Activated CD8-positive, alpha-beta memory T cell treated with anti-CD3 and anti-CD28 coated beads, Interleukin-2, amount 10 ng/mL, durations not matched to agents 7 days and 5 days (primary cell): ENCODE measurements at regions of chr7 and their contacts with region 1.

Region 1: DNA sequence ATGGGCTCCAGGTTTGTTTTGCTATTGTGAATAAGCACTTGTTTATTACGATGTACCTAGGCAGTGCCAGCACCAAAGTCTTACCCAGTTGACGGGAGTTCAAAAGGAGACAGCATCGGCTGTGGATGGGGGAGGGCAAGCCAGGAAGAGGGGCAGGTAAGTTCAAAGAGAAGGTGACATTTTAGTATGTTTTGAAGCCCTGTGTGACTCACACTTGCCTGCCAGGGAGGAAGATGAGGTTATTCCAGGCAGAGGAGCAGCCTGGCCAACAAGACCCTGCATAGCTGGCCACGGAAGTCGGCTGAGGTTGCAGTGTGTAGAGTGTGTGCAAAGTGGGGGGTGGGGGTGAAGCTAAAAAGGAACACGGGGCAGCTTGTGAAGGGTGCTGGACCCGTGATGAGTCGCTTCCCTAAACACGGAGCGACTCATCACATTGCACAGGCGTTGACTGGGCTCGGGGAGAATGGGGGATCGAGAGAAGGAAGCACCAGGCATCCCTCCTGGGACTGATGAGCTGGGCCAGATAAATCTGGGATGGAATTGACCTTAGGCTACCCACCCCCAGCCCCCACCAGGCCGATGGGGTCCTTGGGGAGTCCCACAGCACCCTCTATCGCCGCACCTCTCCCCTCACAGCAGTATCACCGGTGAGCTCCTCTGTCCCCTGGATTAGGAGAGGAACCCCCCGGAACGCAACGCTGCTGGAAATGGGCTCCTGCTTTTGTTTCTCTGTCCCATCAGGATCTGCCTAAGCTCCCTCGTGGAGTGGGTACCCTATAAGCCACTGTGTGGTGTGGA is 97.9 kb upstream of the IKZF1 start:
- DNase-seq: peak; percentile 89
- ATAC-seq: peak; percentile 67
- H3K4me3 Mint-ChIP-seq: peak overlapping the region; percentile 65
- H3K27ac Mint-ChIP-seq: peak overlapping the region; percentile 87
- H3K4me1 Mint-ChIP-seq: peaks cover 93% of the 10 kb centered on the region
- H3K27me3 Mint-ChIP-seq: no peaks in the 10 kb centered on the region

Region 2: DNA sequence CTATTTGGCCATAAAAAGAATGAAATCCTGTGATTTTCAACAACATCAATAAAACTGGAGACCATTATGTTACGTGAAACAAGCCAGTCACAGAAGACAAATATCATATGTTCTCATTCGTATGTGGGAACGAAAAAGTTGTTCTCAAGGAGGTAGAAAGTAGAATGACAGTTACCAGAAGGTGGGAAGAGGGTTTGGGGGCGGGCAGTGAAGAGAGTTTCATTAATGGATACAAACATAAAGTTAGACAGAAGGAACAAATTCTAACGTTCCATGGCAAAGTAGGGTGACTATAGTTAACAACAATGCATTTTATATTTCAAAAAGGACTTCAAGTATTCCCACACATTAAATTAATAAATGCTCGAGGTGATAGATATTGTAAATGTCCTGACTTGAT is 211.0 kb before region 1 on chr7:
- CTCF ChIA-PET with region 1: no interaction called
- DNase-seq: no peak
- ATAC-seq: no peak
- H3K4me3 Mint-ChIP-seq: no peak overlapping the region
- H3K27ac Mint-ChIP-seq: no peak overlapping the region
- H3K4me1 Mint-ChIP-seq: no peaks in the 10 kb centered on the region
- H3K27me3 Mint-ChIP-seq: peaks cover 7% of the 10 kb centered on the region

Region 3: GRCh38 chr7:50056131-50056530 is 150.5 kb before region 1 on chr7:
- CTCF ChIA-PET with region 1: no interaction called
- DNase-seq: no peak
- ATAC-seq: no peak
- H3K4me3 Mint-ChIP-seq: no peak overlapping the region
- H3K27ac Mint-ChIP-seq: no peak overlapping the region
- H3K4me1 Mint-ChIP-seq: no peaks in the 10 kb centered on the region
- H3K27me3 Mint-ChIP-seq: peaks cover 41% of the 10 kb centered on the region

Region 4: DNA sequence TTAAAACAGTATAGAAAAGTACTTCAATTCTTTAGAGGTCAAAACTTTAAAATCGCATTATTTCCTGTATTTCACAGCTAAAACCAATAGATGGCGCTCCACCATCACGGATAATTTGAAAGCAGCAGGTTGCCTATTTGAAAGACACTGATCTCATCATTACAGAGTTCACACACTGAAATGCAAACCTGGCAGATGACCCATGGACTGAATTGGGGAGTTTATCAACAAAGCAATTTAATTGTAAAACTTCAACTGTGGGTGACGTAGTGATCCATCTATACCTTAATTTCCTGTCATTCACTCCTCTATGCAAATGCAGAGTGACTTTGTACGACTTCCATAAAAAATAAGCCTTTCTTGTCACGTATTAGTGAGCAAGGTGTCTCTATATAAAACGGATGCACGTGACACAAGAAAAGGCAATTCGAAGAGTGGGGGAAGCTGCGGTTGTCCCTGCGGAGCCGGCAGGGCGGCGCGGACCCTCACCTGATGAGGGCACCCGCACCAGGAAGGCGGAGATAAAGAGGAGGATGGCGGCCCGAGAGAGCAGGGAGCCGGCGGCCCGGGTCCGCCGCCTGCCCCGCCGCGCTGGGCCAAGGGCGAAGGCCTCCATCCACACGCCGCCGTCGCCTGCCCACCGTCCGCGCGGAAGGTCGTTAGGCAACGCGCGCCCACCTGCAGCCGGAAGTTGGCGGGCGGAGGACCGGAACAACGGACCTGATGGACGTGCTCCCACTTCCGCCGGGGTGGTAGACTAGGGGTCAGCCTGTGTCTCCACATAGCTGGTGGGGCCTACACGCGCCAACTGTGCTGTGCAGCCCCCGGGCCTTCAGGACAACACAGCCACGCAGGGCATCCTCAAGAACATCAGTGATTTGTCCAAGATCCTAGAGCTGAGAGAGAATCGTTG is 113.8 kb before region 1 on chr7 and contains the start of gene ZPBP:
- CTCF ChIA-PET with region 1: interaction called, 10 read pairs
- DNase-seq: peak; percentile 59
- ATAC-seq: peak; percentile 75
- H3K4me3 Mint-ChIP-seq: peak within 1 kb of the TSS; percentile 76
- H3K27ac Mint-ChIP-seq: peak within 1 kb of the TSS; percentile 72
- H3K4me1 Mint-ChIP-seq: peaks cover 8% of the 10 kb centered on the region
- H3K27me3 Mint-ChIP-seq: peaks cover 24% of the 10 kb centered on the region
- total RNA-seq, gene ZPBP: not detected

Region 5: DNA sequence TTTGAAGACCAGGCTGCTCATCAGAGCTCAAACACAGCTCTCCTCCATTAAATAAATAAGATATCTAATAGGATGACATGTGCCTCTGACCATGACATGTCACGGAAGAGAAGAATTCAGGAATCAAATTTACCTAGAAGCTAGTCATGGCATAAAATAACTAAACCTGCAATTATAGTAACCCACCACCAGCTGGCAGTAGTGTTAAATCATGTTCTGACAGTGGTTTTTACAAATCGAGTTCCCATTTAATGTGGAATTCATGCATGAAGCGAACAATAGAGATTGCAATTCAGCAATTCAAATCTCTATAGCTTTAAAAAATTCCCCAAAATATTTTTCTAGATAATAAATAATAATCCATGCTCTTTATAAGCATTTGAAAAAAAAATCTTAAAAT is 23.3 kb after region 1 on chr7:
- CTCF ChIA-PET with region 1: interaction called, 28 read pairs
- DNase-seq: no peak
- ATAC-seq: no peak
- H3K4me3 Mint-ChIP-seq: no peak overlapping the region
- H3K27ac Mint-ChIP-seq: no peak overlapping the region
- H3K4me1 Mint-ChIP-seq: peaks cover 40% of the 10 kb centered on the region
- H3K27me3 Mint-ChIP-seq: no peaks in the 10 kb centered on the region

Region 6: GRCh38 chr7:50298811-50299562 is 92.3 kb after region 1 on chr7:
- CTCF ChIA-PET with region 1: interaction called, 21 read pairs
- DNase-seq: no peak
- ATAC-seq: no peak
- H3K4me3 Mint-ChIP-seq: no peak overlapping the region
- H3K27ac Mint-ChIP-seq: no peak overlapping the region
- H3K4me1 Mint-ChIP-seq: peaks cover 28% of the 10 kb centered on the region
- H3K27me3 Mint-ChIP-seq: peaks cover 5% of the 10 kb centered on the region

Region 7: DNA sequence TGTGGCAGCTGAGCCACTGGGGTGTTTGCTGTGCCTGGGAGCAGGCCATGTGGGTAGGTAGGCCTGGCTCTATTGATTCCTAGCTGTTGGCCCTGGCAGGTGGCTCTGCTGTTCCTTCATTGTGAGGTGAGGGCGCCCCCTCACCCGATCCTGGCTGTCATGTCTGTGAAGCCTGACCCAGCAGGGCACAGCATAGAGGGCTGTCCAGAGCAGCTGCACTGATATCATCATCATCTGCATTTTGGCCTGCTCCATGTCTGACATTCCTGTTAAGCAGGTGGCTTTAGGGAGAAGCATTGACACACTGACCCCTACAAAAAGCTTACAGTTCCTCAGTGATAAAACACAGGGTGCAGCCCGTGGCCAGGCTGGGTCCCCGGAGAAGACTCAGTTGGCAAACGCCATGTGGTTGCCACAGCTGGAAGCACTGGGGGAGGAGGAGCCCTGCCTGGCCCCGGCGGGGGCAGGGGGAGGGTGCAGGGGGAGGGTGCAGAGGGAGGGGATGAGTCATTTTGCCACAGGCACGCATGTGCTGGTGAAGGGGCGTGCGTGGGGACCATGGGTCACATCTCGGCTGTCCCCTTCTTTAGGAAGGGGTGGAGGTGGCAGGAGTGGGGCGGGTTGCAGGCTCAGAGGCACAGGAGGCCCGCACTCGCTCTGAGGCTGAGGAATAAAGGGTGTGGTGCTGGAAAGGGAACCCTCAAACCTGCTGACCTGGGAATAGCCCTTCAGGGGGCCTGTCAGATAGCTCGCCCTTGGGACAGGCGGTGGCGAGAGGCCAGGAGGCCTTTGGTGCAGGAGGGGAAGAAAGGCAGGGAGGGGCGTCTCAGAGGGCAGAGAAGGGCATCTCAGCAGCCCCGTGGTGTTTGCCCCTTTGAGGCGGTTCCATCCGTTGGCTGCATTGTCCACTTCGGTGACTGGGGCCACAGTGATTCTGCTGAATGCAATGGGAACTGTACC is 129.4 kb after region 1 on chr7:
- CTCF ChIA-PET with region 1: interaction called, 36 read pairs
- DNase-seq: peak; percentile 92
- ATAC-seq: peak; percentile 45
- H3K4me3 Mint-ChIP-seq: no peak overlapping the region
- H3K27ac Mint-ChIP-seq: no peak overlapping the region
- H3K4me1 Mint-ChIP-seq: peaks cover 30% of the 10 kb centered on the region
- H3K27me3 Mint-ChIP-seq: no peaks in the 10 kb centered on the region

Region 8: GRCh38 chr7:50369143-50370026 is 162.7 kb after region 1 on chr7:
- CTCF ChIA-PET with region 1: interaction called, 170 read pairs
- DNase-seq: peak; percentile 73
- ATAC-seq: peak; percentile 20
- H3K4me3 Mint-ChIP-seq: peak overlapping the region; percentile 18
- H3K27ac Mint-ChIP-seq: peak overlapping the region; percentile 85
- H3K4me1 Mint-ChIP-seq: peaks cover 94% of the 10 kb centered on the region
- H3K27me3 Mint-ChIP-seq: no peaks in the 10 kb centered on the region

Region 9: DNA sequence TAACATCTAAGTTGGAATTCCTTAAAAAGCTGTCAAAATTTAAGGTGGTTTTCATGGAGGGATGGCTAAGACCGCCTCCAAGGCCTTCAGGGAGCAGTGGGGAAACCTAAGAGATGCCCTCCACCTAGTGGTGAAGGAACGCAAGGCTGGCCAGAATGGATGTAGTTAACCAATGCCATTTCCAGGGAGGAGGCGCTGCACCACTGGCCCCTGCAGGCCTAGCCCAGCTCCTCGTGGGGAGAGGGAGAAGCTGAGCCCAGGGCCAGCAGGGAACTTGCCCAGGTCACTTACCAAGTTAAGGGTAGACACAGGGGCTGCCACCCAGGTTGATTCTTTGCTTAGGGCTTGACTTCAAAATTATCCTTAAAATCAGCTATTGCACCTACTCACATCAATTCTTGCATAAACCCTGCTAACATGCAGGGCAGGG is 211.4 kb after region 1 on chr7:
- CTCF ChIA-PET with region 1: interaction called, 83 read pairs
- DNase-seq: peak; percentile 87
- ATAC-seq: peak; percentile 99
- H3K4me3 Mint-ChIP-seq: no peak overlapping the region
- H3K27ac Mint-ChIP-seq: no peak overlapping the region
- H3K4me1 Mint-ChIP-seq: peaks cover 25% of the 10 kb centered on the region
- H3K27me3 Mint-ChIP-seq: no peaks in the 10 kb centered on the region